Transverse colon (tissue), 4 donors: ENCODE measurements at regions of chr12 and their contacts with region 1.

Region 1: DNA sequence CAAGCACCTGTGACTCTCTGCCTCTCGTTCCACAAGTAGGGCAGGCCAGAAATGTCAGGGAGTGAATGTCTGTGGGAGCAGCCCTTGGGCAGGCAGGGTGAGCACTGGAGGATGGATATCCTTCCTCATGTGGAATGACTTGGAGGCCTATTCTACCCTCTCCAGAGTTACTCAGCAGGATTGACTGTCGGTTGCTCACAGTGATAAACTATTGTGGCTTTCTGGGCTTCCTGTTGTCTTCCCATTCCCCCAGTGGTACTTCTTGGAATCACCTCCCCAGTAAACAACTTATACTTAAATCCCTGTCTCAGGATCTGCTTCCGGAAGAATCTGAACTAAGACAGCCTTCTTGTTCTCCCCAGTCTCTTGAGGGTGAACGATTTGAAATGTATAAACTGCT is 79.6 kb upstream of the MANSC4 start:
- DNase-seq: no peak
- H3K4me3 ChIP-seq: no peak overlapping the region
- H3K27ac ChIP-seq: no peak overlapping the region
- H3K4me1 ChIP-seq: peaks cover 0 to 4% (median 0%) of the 10 kb centered on the region in 4 donors
- H3K27me3 ChIP-seq: no peaks in the 10 kb centered on the region
- CTCF ChIP-seq: no peak
- EP300 ChIP-seq: no peak
- POLR2A ChIP-seq: no peak

Region 2: GRCh38 chr12:27747111-27747820 is 112.4 kb before region 1 on chr12:
- in situ Hi-C with region 1: no loop called
- intact Hi-C with region 1: no loop called
- DNase-seq: no peak
- H3K4me3 ChIP-seq: no peak overlapping the region
- H3K27ac ChIP-seq: peak overlapping the region; percentile 69 to 79 (median 74)
- H3K4me1 ChIP-seq: peaks cover 9 to 36% (median 20%) of the 10 kb centered on the region in 4 donors
- H3K27me3 ChIP-seq: no peaks in the 10 kb centered on the region
- CTCF ChIP-seq: no peak
- EP300 ChIP-seq: no peak
- POLR2A ChIP-seq: no peak

Region 3: DNA sequence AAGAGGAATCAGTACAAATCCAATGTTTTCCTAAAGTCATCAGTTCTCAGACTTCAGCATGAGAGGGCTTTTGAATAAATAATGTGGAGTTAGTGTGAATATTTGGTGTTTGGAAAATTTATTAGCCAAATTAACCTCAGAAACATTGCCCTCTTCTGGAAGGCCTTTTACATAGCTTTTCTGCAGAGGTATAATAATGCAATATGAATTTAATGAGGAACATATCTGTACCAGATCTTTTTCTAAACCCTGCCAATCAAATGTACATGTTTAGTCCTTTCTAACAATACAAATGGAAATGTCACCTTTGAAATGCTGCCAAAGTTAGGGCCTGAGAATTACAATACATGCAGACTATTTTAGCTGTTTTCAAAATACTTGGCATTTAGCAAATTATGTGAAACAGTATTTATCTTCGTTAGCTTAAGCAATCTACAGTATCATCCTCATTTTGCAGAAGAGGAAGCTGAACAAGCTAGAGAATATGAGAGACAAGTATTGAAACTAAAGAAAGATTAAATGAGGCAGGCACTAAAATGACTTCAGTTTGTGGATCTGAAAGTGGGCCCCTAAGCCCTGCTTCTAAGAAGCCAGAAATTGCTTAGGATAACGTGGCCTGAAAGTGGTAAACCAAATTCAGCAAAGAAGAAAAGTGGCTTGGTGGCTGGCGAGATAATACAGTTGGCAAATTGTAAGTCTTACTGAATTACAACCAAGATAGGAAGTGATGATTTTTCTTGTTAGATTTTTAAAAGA is 19.2 kb before region 1 on chr12:
- in situ Hi-C with region 1: no loop called
- intact Hi-C with region 1: loop called (anchors 1 kb)
- DNase-seq: no peak
- H3K4me3 ChIP-seq: no peak overlapping the region
- H3K27ac ChIP-seq: no peak overlapping the region
- H3K4me1 ChIP-seq: no peaks in the 10 kb centered on the region
- H3K27me3 ChIP-seq: no peaks in the 10 kb centered on the region
- CTCF ChIP-seq: no peak
- EP300 ChIP-seq: no peak
- POLR2A ChIP-seq: no peak